ENCODE measurements at regions of chr9 and their contacts with region 1.

Region 1: DNA sequence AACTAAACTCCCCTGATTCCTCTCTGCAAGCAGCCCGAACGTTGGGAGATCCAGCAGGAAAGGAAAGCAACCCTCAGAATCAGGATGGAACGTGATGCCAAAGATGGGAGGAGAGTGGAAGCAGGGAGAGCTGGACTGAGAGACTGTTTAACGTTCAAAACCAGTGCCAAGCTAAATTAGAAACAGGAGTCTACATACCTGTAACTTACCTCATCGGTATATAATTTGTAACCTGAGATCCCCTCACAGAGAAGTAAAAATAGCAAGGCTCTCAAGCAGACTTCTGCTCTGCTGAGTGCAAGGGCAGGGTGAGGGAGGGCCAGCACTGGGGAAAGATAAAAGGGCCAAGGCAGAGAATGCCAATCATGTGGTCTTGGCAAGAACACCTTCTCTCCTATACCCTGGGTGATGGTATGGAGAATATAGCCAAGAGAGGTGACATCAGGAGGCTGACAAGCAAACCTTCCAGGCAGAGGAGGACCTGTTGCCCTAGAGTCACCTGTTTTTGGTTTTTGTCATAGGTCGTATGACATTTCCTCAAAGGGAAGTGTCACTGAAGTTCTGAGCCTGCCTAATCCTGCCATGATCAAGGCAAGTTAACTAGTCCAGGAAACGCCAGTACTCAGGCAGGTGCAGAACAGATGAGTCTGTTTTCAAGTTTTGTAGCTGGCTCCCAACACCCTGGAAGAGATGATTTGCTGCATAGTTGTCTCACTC is 472.0 kb downstream of the NFIB start:
- DNase-seq: no peak
- H3K4me3 ChIP-seq: no peak overlapping the region
- H3K27ac ChIP-seq: no peak overlapping the region
- H3K4me1 ChIP-seq: no peaks in the 10 kb centered on the region
- H3K27me3 ChIP-seq: no peaks in the 10 kb centered on the region
- CTCF ChIP-seq: no peak
- POLR2A ChIP-seq: no peak

Region 2: GRCh38 chr9:13817754-13818278 is 24.1 kb before region 1 on chr9:
- CTCF ChIA-PET with region 1: no interaction called
- POLR2A ChIA-PET with region 1: no interaction called
- dilution Hi-C with region 1: no loop called
- intact Hi-C with region 1: loop called (anchors 2 kb)
- DNase-seq: no peak
- H3K4me3 ChIP-seq: no peak overlapping the region
- H3K27ac ChIP-seq: no peak overlapping the region
- H3K4me1 ChIP-seq: no peaks in the 10 kb centered on the region
- H3K27me3 ChIP-seq: no peaks in the 10 kb centered on the region
- CTCF ChIP-seq: no peak
- POLR2A ChIP-seq: no peak

Region 3: GRCh38 chr9:14018081-14018480 is 176.2 kb after region 1 on chr9:
- CTCF ChIA-PET with region 1: no interaction called
- POLR2A ChIA-PET with region 1: no interaction called
- dilution Hi-C with region 1: no loop called
- intact Hi-C with region 1: no loop called
- DNase-seq: peak; percentile 78
- H3K4me3 ChIP-seq: no peak overlapping the region
- H3K27ac ChIP-seq: no peak overlapping the region
- H3K4me1 ChIP-seq: peaks cover 8% of the 10 kb centered on the region
- H3K27me3 ChIP-seq: no peaks in the 10 kb centered on the region
- CTCF ChIP-seq: no peak
- POLR2A ChIP-seq: no peak

Measured in endothelial cell of umbilical vein (primary cell).